Posterior vena cava (tissue), 2 donors: ENCODE measurements at regions of chr2 and their contacts with region 1.

Region 1: GRCh38 chr2:173059927-173060565 is 15.6 kb upstream of the MAP3K20 start:
- DNase-seq: no peak

Region 2: GRCh38 chr2:173109253-173110188 is 49.5 kb after region 1 on chr2:
- intact Hi-C with region 1: loop called in 1 of 2 experiments (anchors 2 kb)
- DNase-seq: no peak